ENCODE measurements at regions of chr14 and their contacts with region 1.

Region 1: DNA sequence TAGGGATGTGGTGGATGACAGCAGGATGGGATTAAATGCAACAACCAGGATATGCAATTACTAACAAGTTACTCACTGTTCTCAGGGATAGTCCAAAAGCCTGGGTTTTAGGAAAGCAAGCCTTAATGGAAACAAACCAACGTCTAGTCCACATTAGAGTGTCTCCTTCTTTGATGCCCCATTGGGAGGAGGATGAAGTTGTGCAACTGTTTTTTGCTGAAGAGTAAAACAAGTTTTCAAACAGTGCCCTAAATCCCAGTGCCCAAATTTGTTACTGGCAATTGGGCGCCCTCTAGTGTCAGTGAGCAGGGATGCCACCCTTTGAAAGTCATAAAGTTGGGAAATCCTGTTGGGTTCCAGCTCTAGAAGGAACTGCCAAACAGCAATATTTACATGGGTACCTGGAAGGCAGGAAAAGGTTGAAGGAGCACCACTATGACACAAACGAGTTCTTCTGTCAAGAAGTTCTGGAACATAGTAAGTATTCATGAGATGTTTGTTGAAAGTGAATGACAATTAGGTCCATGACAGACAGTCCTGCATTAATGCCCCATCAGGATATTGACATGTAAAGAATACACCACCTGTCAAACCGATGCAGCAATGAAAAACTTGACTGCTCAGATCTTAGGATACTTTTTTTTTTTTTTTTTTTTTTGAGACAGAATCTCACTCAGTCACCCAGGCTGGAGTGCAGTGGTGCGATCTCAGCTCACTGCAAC is 11.1 kb upstream of the DPF3 start:
- DNase-seq: peak; percentile 52
- ATAC-seq: peak; percentile 83
- H3K4me3 ChIP-seq: no peak overlapping the region
- H3K27ac ChIP-seq: no peak overlapping the region
- H3K4me1 ChIP-seq: peaks cover 4% of the 10 kb centered on the region; the same call in 1 of the 2 replicates
- H3K27me3 ChIP-seq: no peaks in the 10 kb centered on the region
- CTCF ChIP-seq: peak; percentile 84

Region 2: GRCh38 chr14:72516936-72517700 is 387.9 kb before region 1 on chr14:
- CTCF ChIA-PET with region 1: interaction called, 7 read pairs
- POLR2A ChIA-PET with region 1: no interaction called
- in situ Hi-C with region 1: no loop called
- intact Hi-C with region 1: loop called (anchors 1 kb)
- DNase-seq: peak; percentile 59
- ATAC-seq: peak; percentile 78
- H3K4me3 ChIP-seq: no peak overlapping the region
- H3K27ac ChIP-seq: no peak overlapping the region
- H3K4me1 ChIP-seq: no peaks in the 10 kb centered on the region
- H3K27me3 ChIP-seq: peaks cover 3% of the 10 kb centered on the region; the same call in 1 of the 2 replicates
- CTCF ChIP-seq: peak; percentile 87